ENCODE measurements at regions of chr9 and their contacts with region 1.

Region 1: GRCh38 chr9:98010445-98010844 is 27.3 kb downstream of the ANP32B start:
- DNase-seq: peak; percentile 36 to 80 (median 68)
- H3K4me3 ChIP-seq: peak overlapping the region in 2 of 7 experiments; percentile 0 to 2
- H3K27ac ChIP-seq: no peak overlapping the region
- H3K4me1 ChIP-seq: peaks cover 0 to 22% (median 10%) of the 10 kb centered on the region in 4 experiments
- H3K27me3 ChIP-seq: no peaks in the 10 kb centered on the region

Region 2: DNA sequence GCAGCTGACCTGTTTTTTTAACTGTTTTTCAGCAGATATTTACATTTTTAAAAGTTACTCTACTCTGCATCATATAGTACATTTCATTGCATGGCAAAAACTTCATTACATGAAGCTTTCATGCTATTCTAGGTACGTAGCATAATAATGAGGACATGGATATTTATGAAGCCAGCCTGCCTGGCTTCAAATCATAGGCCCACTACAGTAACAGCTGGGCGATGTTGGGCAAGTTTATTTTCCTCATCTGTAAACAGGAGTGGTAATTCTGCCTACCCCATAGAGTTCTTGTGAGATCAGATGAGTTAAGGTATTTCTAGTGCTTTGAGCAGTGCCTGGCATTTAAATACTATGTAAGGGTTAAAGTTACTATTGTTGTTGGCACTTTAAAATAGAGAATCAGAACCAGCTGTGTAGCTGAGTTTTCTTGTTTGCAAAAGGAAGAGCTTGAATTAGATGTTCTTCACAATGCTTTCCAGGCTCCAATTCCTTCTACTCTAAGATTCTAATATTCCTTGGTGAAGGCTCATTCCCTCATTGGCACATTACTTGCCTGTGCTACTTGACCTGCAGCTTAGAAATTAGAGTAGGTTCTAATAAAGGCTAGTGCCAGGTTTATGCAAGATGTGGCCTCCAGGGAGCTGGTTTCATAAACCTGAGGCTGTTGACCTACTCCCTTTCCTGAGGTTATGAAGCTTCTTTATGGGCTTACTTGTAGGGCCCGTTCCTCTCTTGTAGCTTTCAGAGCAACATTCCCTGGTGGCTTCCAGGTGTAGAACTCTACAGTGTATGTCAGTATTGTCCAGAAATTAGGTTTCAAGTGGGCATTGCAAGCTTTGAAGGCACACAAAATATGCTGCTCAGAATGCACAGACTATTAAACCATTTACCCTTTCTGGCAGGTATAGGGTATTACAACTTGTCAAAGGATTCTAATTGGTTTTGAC is 12.8 kb before region 1 on chr9:
- CTCF ChIA-PET with region 1: interaction called, 14 read pairs
- POLR2A ChIA-PET with region 1: no interaction called
- DNase-seq: no peak
- H3K4me3 ChIP-seq: no peak overlapping the region
- H3K27ac ChIP-seq: peak overlapping the region in 1 of 2 experiments; percentile 36
- H3K4me1 ChIP-seq: peaks cover 14 to 21% (median 15%) of the 10 kb centered on the region in 4 experiments
- H3K27me3 ChIP-seq: no peaks in the 10 kb centered on the region